Esophagus muscularis mucosa (tissue), 4 donors: ENCODE measurements at regions of chr4 and their contacts with region 1.

Region 1: GRCh38 chr4:242121-242848 is 63.0 kb downstream of the ZNF732 start:
- DNase-seq: no peak
- H3K4me3 ChIP-seq: peak overlapping the region; percentile 47 to 65 (median 52)
- H3K27ac ChIP-seq: peak overlapping the region; percentile 17 to 52 (median 34)
- H3K4me1 ChIP-seq: peaks cover 7 to 19% (median 12%) of the 10 kb centered on the region in 4 donors
- H3K27me3 ChIP-seq: no peaks in the 10 kb centered on the region
- CTCF ChIP-seq: peak; percentile 86 to 90 (median 90)
- EP300 ChIP-seq: no peak
- POLR2A ChIP-seq: no peak

Region 2: GRCh38 chr4:132483-132882 is 109.8 kb before region 1 on chr4:
- intact Hi-C with region 1: no loop called
- DNase-seq: no peak
- H3K4me3 ChIP-seq: no peak overlapping the region
- H3K27ac ChIP-seq: no peak overlapping the region
- H3K4me1 ChIP-seq: no peaks in the 10 kb centered on the region
- H3K27me3 ChIP-seq: no peaks in the 10 kb centered on the region
- CTCF ChIP-seq: no peak
- EP300 ChIP-seq: no peak
- POLR2A ChIP-seq: no peak

Region 3: GRCh38 chr4:223913-224497 is 18.3 kb before region 1 on chr4:
- intact Hi-C with region 1: no loop called
- DNase-seq: no peak
- H3K4me3 ChIP-seq: no peak overlapping the region
- H3K27ac ChIP-seq: no peak overlapping the region
- H3K4me1 ChIP-seq: no peaks in the 10 kb centered on the region
- H3K27me3 ChIP-seq: no peaks in the 10 kb centered on the region
- CTCF ChIP-seq: no peak
- EP300 ChIP-seq: no peak
- POLR2A ChIP-seq: no peak

Region 4: DNA sequence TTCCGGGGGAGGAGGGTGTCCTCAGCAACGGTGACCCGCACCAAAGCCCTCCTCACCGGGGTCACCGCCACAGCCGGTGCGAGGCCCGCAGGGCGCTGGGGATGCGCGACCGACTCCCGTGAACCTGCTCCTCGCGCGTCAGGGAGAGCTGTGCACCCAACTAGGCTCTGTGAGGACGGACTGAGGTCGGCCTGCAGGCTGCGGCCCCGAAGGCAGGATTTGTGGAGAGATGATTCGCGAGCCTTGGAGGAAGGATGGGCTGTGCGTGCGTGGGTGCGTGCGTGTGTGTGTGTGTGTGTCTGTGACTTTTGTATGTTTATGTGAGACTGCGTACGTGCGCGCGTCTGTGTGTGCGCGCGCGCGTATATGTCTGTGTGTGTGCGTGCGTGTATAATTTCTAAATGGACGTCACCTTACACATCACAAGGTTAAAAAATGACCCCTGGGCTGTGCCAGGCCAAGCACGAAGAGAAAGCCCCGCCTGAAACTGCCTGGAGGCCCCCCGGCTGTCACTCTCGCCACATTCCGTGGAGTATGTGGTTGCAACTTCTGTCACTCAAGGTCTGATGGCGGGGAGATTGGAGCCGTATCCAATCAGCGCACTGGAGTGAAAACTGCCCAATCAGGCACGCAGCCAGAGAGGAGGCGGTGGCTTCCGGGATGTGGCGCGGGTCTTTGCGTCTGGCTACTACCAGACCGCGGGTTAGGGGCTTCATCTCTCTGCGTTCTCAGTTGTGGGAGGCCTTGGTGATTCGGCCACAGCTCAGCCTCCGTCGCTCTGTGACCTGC is 95.1 kb after region 1 on chr4 and contains the start of gene ZNF141:
- intact Hi-C with region 1: loop called (anchors 5 kb)
- DNase-seq: peak; percentile 99
- H3K4me3 ChIP-seq: peak within 1 kb of the TSS; percentile 88 to 96 (median 92)
- H3K27ac ChIP-seq: peak within 1 kb of the TSS; percentile 90 to 98 (median 96)
- H3K4me1 ChIP-seq: peaks cover 21 to 39% (median 26%) of the 10 kb centered on the region in 4 donors
- H3K27me3 ChIP-seq: no peaks in the 10 kb centered on the region
- CTCF ChIP-seq: no peak
- EP300 ChIP-seq: peak; percentile 47
- POLR2A ChIP-seq: peak; percentile 69
- total RNA-seq, gene ZNF141: 8.6 to 15.0 (median 10.1) TPM

Region 5: DNA sequence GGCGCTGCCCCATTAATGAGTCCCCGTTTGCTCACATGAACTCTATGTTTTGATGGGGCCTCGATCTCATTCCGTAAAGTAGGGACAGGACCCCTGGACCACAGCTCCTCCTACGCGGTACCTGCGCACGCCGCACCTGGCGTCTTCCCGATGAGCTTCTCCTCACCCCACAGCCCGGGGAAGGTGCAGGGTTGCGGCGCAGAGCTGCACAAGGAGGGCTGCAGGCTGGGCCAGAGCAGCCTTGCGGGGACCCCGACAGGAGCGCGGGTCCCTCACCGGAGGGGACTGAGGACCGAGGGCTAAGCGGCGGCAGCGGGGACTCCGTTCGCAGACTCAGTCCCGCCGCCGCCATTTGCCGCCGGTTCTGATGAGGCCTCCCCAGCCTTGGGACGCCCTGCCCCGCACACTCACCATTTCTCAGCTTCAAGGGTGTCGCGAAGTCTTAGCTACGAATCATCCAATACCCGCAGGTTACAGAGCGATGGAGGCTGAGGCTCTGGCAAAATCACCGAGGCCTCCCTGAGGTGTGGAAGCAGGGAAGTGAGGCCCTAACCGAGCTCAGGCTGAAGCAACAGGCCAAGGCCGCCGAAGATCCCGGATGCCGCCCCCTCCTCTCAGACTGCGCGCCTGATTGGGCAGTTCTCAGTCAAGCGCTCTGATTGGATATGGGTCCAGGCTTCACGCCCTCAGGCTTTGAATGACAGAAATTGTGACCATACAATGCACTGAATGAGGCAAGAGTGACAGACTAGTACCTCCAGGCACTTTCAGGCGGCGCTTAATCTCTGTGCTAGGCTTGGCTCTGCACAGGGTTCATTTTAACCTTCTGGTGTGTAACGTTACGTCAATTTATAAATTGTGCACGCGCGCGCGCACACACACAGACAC is 231.5 kb after region 1 on chr4:
- intact Hi-C with region 1: loop called (anchors 10 kb)
- DNase-seq: peak; percentile 99
- H3K4me3 ChIP-seq: peak overlapping the region; percentile 76 to 97 (median 82)
- H3K27ac ChIP-seq: peak overlapping the region; percentile 82 to 93 (median 92)
- H3K4me1 ChIP-seq: peaks cover 14 to 23% (median 20%) of the 10 kb centered on the region in 4 donors
- H3K27me3 ChIP-seq: no peaks in the 10 kb centered on the region
- CTCF ChIP-seq: peak in 1 of 3 experiments; percentile 4
- EP300 ChIP-seq: no peak
- POLR2A ChIP-seq: peak; percentile 25

Region 6: DNA sequence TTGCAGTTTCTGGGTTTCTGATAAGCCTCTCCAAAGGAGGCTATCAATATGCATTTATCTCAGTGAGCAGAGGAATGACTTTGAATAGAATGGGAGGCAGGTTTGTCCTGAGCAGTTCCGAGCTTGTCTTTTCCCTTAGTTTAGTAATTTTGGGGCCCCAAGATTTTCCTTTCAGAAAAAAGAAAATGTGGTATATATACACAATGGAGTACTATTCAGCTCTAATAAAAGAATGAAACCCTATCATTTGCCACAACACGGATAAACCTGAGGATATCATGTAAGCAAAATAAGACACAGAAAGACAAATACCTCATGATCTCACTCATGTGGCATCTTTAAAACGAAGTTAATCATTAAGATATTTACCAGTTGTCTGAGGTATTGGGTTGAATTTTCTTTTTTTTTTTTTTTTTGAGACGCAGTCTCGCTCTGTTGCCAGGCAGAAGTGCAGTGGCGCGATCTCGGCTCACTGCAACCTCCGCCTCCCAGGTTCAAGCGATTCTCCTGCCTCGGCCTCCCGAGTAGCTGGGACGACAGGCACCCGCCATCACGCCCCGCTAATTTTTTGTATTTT is 256.1 kb after region 1 on chr4:
- intact Hi-C with region 1: loop called (anchors 5 kb)
- DNase-seq: no peak
- H3K4me3 ChIP-seq: peak overlapping the region; percentile 89 to 100 (median 94)
- H3K27ac ChIP-seq: peak overlapping the region; percentile 85 to 92 (median 90)
- H3K4me1 ChIP-seq: peaks cover 24 to 48% (median 35%) of the 10 kb centered on the region in 4 donors
- H3K27me3 ChIP-seq: no peaks in the 10 kb centered on the region
- CTCF ChIP-seq: no peak
- EP300 ChIP-seq: no peak
- POLR2A ChIP-seq: no peak